ENCODE measurements at regions of chr4 and their contacts with region 1.

Region 1: DNA sequence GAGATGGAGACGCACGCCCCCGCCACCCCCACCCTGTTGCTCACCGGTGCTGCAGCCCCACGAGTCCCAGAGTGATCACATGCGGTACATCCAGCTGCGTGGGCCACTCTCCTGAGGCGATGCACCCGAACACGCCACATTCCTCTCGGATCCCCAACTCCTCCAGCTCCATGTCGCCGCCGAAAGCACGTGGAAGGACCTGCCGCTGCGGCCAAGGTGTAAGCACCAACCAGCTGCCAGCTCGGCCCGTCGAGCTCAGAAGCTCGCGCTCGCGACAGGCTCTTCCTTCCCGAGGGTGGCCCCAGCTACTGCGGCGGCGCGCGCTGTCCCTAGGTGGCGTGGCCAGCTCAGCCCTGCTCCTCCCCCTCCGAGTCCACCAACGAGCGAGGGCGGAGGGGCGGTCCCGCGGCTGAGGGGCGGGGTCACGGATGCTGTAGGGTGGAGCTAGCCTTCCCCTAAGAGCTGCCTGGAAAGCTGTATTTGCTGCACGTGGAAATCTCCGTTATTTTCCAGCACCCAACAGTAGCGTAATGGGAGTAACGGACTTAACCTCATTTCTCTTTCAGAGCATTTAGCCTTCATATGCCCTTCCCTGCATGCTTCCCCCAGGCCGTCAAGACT is at the start of gene PPAT:
- DNase-seq: peak; percentile 99
- ATAC-seq: peak; percentile 83
- H3K4me3 Mint-ChIP-seq: peak within 1 kb of the TSS; percentile 99
- H3K27ac Mint-ChIP-seq: peak within 1 kb of the TSS; percentile 99
- H3K4me1 Mint-ChIP-seq: peaks cover 54% of the 10 kb centered on the region
- H3K27me3 Mint-ChIP-seq: no peaks in the 10 kb centered on the region
- total RNA-seq, gene PPAT: 27.1 to 41.4 TPM

Region 2: DNA sequence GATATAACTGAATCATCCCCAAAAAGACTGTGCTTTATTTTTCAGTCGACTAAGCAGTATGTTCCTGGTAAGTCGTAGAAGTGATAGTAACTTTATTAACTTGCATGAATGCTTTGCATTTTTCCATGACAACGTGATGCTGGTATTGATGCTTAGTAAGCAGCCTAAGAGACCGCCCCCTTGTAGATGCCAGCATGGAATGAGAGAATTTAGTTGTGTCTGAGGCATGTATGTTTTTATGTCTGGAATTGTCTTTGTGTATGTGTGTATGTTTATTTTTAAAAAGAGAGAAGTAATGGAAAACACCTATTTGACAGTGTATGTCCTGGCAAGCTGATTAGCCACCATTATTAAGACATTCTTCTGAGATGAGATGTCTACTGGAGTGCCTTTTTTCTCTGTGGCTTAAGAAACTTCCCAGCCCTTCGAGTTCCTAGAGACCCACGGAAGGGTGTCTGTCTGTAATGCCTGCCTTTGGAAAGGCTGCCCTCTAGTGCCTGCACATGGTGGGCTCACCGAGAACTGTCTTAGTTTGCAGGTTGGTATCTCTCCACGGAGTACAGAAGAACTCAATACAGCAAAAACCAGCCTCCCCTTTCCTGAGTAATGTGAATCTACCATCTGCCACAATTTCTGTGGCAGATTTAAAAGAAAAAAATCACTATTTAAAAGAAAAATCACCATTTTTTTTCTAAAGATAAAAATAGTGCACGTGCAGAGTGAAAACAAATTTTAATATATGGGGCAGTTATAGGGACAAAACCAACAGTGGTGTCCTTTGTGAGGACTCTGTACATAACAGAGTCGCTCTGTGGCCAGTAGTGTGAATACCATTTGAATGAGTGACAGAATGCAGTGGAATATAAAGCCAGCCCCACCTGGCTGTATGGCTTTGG is 134.0 kb before region 1 on chr4:
- CTCF ChIA-PET with region 1: no interaction called
- DNase-seq: peak; percentile 69
- ATAC-seq: peak; percentile 92
- H3K4me3 Mint-ChIP-seq: no peak overlapping the region
- H3K27ac Mint-ChIP-seq: no peak overlapping the region
- H3K4me1 Mint-ChIP-seq: peaks cover 3% of the 10 kb centered on the region
- H3K27me3 Mint-ChIP-seq: peaks cover 10% of the 10 kb centered on the region

Region 3: DNA sequence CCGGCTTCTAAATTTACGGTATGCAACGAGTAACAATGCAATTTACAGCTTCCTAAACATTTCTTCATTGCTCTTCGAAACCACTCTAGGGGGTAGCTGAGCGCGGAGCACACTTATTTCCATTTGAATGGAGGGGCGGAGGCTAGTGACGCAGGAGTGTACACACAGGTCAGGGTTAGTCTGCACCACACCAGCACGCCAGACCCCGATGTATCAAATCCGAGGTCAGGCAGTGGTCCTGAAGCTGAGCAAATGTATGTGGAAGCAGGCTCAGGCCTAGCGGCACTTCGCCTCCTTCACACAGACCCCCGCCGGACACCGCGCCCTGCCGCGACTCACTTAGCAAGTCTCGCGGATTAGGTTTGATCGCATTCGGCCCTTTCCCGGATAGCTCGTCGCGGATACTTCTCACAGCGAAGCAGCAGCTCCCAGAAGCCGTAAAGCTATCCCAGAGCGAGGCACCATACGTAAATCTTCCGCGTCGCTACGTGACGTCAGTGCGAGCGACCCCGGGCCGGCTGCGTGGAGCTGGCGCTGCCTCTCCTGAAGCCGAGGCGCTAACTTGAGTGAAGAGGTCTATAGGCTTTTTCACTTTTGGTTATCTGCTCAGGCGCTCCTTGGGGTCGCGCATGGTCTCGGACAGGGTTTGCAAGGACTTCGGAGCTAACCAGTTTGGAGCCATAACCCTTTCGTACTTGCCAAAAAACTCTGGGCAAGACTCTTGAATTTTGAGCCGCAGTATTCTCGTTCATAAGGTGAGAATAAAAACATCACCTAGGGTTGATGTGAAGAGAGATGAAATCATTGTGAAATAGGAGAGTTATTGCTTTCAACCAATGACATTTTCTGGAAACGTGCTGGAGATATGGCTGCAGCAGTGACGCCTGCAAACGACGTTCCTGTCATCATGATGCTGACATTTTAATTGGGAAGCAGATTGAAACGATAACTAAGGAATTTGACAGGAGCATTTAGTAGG is 48.1 kb before region 1 on chr4 and contains the start of gene AASDH:
- CTCF ChIA-PET with region 1: interaction called, 13 read pairs
- DNase-seq: peak; percentile 97
- ATAC-seq: peak; percentile 93
- H3K4me3 Mint-ChIP-seq: peak within 1 kb of the TSS; percentile 99
- H3K27ac Mint-ChIP-seq: peak within 1 kb of the TSS; percentile 100
- H3K4me1 Mint-ChIP-seq: peaks cover 42% of the 10 kb centered on the region
- H3K27me3 Mint-ChIP-seq: no peaks in the 10 kb centered on the region
- total RNA-seq, gene AASDH: 9.4 to 11.8 TPM

Region 4: DNA sequence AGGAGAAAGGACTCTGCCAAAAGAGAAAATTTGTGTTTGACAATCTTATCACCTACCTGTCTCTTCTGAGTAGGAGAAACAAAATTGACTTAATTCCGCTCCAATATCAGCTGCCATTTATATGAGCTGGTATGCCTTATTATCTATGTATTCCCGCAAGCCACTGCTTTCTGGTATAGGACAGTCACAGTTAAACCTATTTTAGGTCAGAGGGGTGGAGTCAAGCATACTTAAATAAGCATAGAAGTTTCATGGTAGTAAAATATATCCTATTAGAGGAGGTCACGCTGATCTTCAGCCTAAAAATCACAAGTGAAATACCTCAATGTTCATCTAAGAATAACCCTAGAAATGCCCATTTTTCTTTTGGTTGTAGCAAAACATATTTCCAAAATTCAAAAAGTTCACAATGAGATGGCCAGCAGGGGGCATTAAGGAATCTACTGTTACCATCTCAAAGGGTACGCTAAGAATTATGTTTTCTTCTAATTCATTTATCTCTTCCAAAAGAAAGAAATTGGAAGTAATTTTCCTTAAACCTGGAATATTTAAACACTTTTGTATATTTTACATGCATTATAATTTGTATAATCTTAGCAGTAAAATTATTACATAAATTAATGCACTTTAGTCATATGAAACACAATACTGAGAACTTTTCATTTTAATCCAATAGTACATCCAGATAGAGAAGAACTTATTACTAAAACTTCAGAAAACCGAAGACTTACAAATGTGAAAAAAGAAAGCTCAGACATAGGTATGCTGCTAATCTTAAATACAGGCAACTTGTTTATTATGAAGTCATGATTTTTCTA is 10.5 kb before region 1 on chr4:
- CTCF ChIA-PET with region 1: interaction called, 41 read pairs
- DNase-seq: no peak
- ATAC-seq: no peak
- H3K4me3 Mint-ChIP-seq: no peak overlapping the region
- H3K27ac Mint-ChIP-seq: no peak overlapping the region
- H3K4me1 Mint-ChIP-seq: peaks cover 29% of the 10 kb centered on the region
- H3K27me3 Mint-ChIP-seq: no peaks in the 10 kb centered on the region

Region 5: GRCh38 chr4:56465599-56466295 is 30.3 kb after region 1 on chr4:
- CTCF ChIA-PET with region 1: interaction called, 16 read pairs
- DNase-seq: no peak
- ATAC-seq: no peak
- H3K4me3 Mint-ChIP-seq: peak overlapping the region; percentile 95
- H3K27ac Mint-ChIP-seq: peak overlapping the region; percentile 94
- H3K4me1 Mint-ChIP-seq: peaks cover 46% of the 10 kb centered on the region
- H3K27me3 Mint-ChIP-seq: no peaks in the 10 kb centered on the region